ENCODE measurements at regions of chr4 and their contacts with region 1.

Region 1: DNA sequence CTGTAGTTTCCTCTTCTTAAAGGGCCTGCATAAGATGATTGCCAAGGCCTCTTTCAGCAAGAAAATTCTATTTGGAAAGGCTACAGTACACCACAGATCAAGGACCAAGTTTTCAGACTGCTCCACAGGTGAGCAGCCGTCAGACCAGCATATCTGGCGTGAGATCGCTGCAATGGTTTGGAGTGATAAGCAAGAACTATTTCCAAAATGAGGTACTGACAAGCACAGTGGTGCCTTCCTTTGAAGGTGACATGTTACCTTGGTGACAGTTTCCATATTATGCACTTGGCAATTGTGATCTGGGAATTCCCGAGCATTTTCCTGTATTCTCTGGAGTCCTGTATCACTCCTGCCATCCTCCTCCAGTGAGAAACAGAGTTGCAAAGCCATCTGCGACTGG is 7.3 kb upstream of the TMEM150C start:
- DNase-seq: no peak
- H3K4me3 ChIP-seq: no peak overlapping the region
- CTCF ChIP-seq: no peak

Region 2: DNA sequence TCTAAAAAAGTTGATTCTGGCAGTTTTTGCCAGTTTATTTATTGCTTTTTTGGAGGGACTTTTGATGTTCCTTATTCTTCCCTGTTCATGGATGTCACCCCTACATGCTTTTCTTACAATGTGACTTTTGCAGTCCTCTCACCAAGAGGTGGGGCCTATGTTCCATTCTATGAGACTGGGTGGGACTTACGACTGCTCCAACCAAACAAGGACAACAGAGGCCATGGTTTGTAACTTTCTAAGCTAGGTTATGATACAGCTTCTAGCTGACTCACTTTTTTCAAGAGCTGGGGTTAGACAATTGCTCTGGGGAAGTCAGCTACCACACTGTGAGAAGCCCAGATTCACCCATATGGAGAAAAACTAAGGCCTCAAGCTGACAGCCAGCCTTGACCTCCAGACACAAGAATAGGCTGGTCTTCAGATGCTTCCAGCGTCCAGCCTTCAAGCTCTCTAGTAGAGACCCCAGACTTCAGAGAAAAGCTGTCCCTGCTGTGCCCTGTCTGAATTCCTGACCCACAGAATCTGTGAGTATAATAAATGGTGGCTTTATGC is 99.2 kb before region 1 on chr4:
- in situ Hi-C with region 1: loop called (anchors 5 kb)
- DNase-seq: no peak
- H3K4me3 ChIP-seq: no peak overlapping the region
- CTCF ChIP-seq: no peak

Region 3: GRCh38 chr4:82601242-82602015 is 32.4 kb after region 1 on chr4:
- in situ Hi-C with region 1: no loop called
- DNase-seq: no peak
- H3K4me3 ChIP-seq: no peak overlapping the region
- CTCF ChIP-seq: no peak

Region 4: GRCh38 chr4:82629238-82630000 is 60.3 kb after region 1 on chr4:
- in situ Hi-C with region 1: no loop called
- DNase-seq: no peak
- H3K4me3 ChIP-seq: no peak overlapping the region
- CTCF ChIP-seq: no peak

Region 5: DNA sequence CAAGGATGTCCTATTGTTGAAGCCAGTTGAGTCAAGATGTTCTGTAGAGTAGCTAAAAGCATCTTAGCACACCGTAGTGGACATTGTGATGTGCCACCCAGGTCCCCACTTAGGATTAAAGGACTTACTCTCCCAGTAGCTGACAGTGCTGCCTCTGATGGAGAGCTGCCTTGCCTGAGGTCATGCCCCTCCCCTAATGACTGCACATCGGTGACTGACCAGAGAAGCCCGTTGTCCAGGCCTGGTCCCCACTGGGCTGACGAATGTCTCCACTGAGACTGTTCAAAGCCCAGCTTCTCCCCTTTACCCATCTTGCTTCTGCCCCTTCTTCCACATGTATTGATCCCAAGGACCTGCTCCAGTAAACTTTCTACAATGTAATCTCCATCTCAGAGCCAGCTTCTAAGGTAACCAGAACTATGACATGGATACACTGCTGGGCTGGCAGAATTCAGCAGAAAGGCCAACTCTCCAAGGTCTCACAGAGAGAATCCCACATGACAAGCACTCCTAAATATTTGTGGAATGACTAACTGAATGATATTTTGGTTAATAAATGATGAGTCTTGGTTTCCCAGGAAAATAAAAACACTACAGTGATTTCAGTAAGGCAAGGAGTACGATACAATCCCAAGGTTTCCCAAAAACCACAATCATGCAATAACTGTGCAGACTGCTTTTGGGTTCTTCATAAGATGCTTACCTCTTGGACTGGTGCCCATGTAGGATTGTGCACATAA is 75.1 kb after region 1 on chr4:
- in situ Hi-C with region 1: no loop called
- DNase-seq: peak; percentile 85
- H3K4me3 ChIP-seq: no peak overlapping the region
- CTCF ChIP-seq: no peak

Region 6: GRCh38 chr4:83046693-83047473 is 477.8 kb after region 1 on chr4:
- in situ Hi-C with region 1: no loop called
- DNase-seq: no peak
- H3K4me3 ChIP-seq: no peak overlapping the region
- CTCF ChIP-seq: no peak